ENCODE measurements at regions of chr11 and their contacts with region 1.

Region 1: GRCh38 chr11:76512851-76513653 is 68.2 kb downstream of the EMSY start:
- DNase-seq: peak in 1 of 2 experiments; percentile 32
- H3K4me3 ChIP-seq: no peak overlapping the region
- H3K4me3 Mint-ChIP-seq: no peak overlapping the region
- H3K27ac Mint-ChIP-seq: no peak overlapping the region
- H3K4me1 ChIP-seq: no peaks in the 10 kb centered on the region
- H3K4me1 Mint-ChIP-seq: peaks cover 9% of the 10 kb centered on the region
- H3K27me3 ChIP-seq: no peaks in the 10 kb centered on the region
- H3K27me3 Mint-ChIP-seq: no peaks in the 10 kb centered on the region
- CTCF ChIP-seq: peak; percentile 41 to 43

Region 2: GRCh38 chr11:75896843-75897419 is 616.1 kb before region 1 on chr11:
- CTCF ChIA-PET with region 1: no interaction called
- POLR2A ChIA-PET with region 1: no interaction called
- intact Hi-C with region 1: loop called (anchors 10 kb)
- DNase-seq: peak in 1 of 2 experiments; percentile 56
- H3K4me3 ChIP-seq: no peak overlapping the region
- H3K4me3 Mint-ChIP-seq: no peak overlapping the region
- H3K27ac Mint-ChIP-seq: no peak overlapping the region
- H3K4me1 ChIP-seq: no peaks in the 10 kb centered on the region
- H3K4me1 Mint-ChIP-seq: no peaks in the 10 kb centered on the region
- H3K27me3 ChIP-seq: no peaks in the 10 kb centered on the region
- H3K27me3 Mint-ChIP-seq: no peaks in the 10 kb centered on the region
- CTCF ChIP-seq: peak; percentile 68 to 81

Region 3: GRCh38 chr11:76318744-76319384 is 194.2 kb before region 1 on chr11:
- CTCF ChIA-PET with region 1: no interaction called
- POLR2A ChIA-PET with region 1: no interaction called
- intact Hi-C with region 1: loop called (anchors 1 kb)
- DNase-seq: peak; percentile 90 to 94
- H3K4me3 ChIP-seq: no peak overlapping the region
- H3K4me3 Mint-ChIP-seq: no peak overlapping the region
- H3K27ac Mint-ChIP-seq: no peak overlapping the region
- H3K4me1 ChIP-seq: peaks cover 12% of the 10 kb centered on the region
- H3K4me1 Mint-ChIP-seq: no peaks in the 10 kb centered on the region
- H3K27me3 ChIP-seq: no peaks in the 10 kb centered on the region
- H3K27me3 Mint-ChIP-seq: no peaks in the 10 kb centered on the region
- CTCF ChIP-seq: peak; percentile 99

Region 4: GRCh38 chr11:76419896-76420295 is 93.2 kb before region 1 on chr11:
- CTCF ChIA-PET with region 1: interaction called, 5 read pairs
- POLR2A ChIA-PET with region 1: no interaction called
- intact Hi-C with region 1: loop called (anchors 2 kb)
- DNase-seq: peak in 1 of 2 experiments; percentile 62
- H3K4me3 ChIP-seq: no peak overlapping the region
- H3K4me3 Mint-ChIP-seq: no peak overlapping the region
- H3K27ac Mint-ChIP-seq: no peak overlapping the region
- H3K4me1 ChIP-seq: no peaks in the 10 kb centered on the region
- H3K4me1 Mint-ChIP-seq: no peaks in the 10 kb centered on the region
- H3K27me3 ChIP-seq: no peaks in the 10 kb centered on the region
- H3K27me3 Mint-ChIP-seq: peaks cover 5% of the 10 kb centered on the region
- CTCF ChIP-seq: peak; percentile 67 to 77

Region 5: DNA sequence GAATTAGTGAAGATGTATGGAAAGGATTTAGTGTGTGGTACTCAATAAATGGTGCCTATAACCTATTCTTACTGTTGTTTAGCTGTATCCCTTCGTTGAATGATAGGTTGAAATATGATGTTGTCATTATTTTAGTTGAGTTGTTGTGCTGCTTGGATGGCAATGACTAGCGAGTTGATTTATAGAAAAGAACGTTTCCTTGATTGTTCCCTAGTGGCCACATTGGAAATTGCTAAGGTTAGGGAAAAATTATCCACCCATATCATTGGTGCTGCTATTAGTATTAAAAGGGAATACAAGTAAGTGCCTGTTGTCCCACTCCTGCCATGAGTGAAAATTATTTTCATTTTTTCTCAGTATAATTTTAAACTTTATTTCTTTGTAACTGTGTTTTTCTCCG is 53.8 kb before region 1 on chr11:
- CTCF ChIA-PET with region 1: no interaction called
- POLR2A ChIA-PET with region 1: no interaction called
- intact Hi-C with region 1: loop called (anchors 5 kb)
- DNase-seq: no peak
- H3K4me3 ChIP-seq: no peak overlapping the region
- H3K4me3 Mint-ChIP-seq: no peak overlapping the region
- H3K27ac Mint-ChIP-seq: no peak overlapping the region
- H3K4me1 ChIP-seq: peaks cover 31% of the 10 kb centered on the region
- H3K4me1 Mint-ChIP-seq: peaks cover 25% of the 10 kb centered on the region
- H3K27me3 ChIP-seq: no peaks in the 10 kb centered on the region
- H3K27me3 Mint-ChIP-seq: no peaks in the 10 kb centered on the region
- CTCF ChIP-seq: peak; percentile 62 to 74

Region 6: DNA sequence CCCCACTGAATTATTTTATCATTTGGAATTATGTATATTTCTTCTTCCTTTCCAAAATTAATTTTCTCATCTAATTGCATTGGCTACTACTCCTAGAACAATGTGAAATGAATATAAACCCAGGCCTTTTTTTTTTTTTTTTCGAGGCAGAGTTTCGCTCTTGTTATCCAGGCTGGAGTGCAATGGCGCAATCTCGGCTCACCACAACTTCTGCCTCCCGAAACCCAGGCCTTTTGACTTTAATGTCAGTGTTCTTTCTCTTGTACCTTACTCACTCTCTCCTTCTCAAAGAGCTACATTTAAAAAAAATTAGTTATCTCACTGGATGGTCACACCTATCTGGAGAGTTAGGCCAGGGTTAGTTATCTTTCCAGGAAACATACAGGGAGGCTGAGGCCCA is 192.8 kb after region 1 on chr11:
- CTCF ChIA-PET with region 1: interaction called, 11 read pairs
- POLR2A ChIA-PET with region 1: no interaction called
- intact Hi-C with region 1: no loop called
- DNase-seq: no peak
- H3K4me3 ChIP-seq: no peak overlapping the region
- H3K4me3 Mint-ChIP-seq: no peak overlapping the region
- H3K27ac Mint-ChIP-seq: no peak overlapping the region
- H3K4me1 ChIP-seq: peaks cover 7% of the 10 kb centered on the region
- H3K4me1 Mint-ChIP-seq: peaks cover 2% of the 10 kb centered on the region
- H3K27me3 ChIP-seq: no peaks in the 10 kb centered on the region
- H3K27me3 Mint-ChIP-seq: peaks cover 4% of the 10 kb centered on the region
- CTCF ChIP-seq: no peak

Measured in Caco-2 (cell line).